ENCODE measurements at regions of chr18 and their contacts with region 1.

Region 1: GRCh38 chr18:3623769-3624545 is 174.0 kb downstream of the TGIF1 start:
- DNase-seq: no peak
- ATAC-seq: no peak
- H3K4me3 Mint-ChIP-seq: no peak overlapping the region
- H3K27ac Mint-ChIP-seq: no peak overlapping the region
- H3K4me1 Mint-ChIP-seq: peaks cover 17% of the 10 kb centered on the region
- H3K27me3 Mint-ChIP-seq: peaks cover 2% of the 10 kb centered on the region
- CTCF ChIP-seq: no peak

Region 2: DNA sequence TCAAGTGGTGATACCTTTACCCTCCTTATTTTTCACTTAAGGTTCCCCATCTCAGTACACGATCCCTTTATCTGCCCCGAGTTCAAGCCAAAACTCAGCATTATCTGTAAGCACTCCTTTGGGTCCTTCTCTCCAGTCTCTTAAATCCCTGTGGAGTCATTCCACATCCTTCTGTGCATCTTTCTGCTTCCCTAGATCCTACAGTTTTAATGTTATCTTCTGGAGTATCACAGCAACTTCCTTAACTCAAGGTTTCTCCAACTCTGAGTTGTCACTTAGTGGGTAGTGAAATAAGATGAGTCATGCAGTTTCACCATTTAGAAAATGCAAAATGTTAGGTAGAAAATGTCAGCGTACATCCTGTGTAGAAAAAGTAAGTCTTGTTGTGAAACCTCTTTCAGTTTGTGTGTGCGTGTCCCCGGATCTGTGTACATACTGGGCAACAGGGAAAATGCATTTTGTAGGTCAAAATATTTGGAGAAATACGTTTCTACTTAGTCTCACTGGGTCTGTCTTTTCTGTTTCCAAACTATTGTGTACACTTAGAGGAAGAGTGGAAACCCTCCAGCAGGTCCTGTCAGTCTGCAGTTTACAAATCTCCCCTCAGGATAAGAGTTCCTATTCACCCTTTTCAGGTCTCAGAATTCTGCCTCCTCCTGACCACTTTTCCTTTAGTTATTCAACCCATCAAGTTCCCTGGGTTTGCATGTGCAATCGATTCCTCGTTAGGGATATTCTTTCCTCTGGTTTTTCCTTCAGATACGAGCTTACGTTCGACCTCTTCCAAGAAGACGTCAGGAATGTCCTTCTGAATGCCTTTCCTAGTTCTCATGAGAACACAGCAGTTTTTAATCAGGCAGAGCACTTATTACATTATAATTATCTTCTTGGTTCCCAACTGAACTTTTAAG is 19.2 kb before region 1 on chr18:
- CTCF ChIA-PET with region 1: no interaction called
- POLR2A ChIA-PET with region 1: interaction called, 4 read pairs
- intact Hi-C with region 1: loop called (anchors 1 kb)
- DNase-seq: no peak
- ATAC-seq: peak; percentile 73
- H3K4me3 Mint-ChIP-seq: no peak overlapping the region
- H3K27ac Mint-ChIP-seq: no peak overlapping the region
- H3K4me1 Mint-ChIP-seq: peaks cover 3% of the 10 kb centered on the region
- H3K27me3 Mint-ChIP-seq: no peaks in the 10 kb centered on the region
- CTCF ChIP-seq: no peak

Measured in activated B cell treated with CpG ODN at 0.5 μM for 24 hours (primary cell).